Activated naive CD4-positive, alpha-beta T cell treated with anti-CD3 and anti-CD28 coated beads for 36 hours (primary cell): ENCODE measurements at regions of chr12 and their contacts with region 1.

Region 1: GRCh38 chr12:46124848-46125619 is 134.7 kb upstream of the SCAF11 start:
- DNase-seq: peak; percentile 70
- H3K4me3 Mint-ChIP-seq: peak overlapping the region; percentile 10
- H3K27ac Mint-ChIP-seq: no peak overlapping the region
- H3K4me1 Mint-ChIP-seq: no peaks in the 10 kb centered on the region
- H3K27me3 Mint-ChIP-seq: no peaks in the 10 kb centered on the region

Region 2: DNA sequence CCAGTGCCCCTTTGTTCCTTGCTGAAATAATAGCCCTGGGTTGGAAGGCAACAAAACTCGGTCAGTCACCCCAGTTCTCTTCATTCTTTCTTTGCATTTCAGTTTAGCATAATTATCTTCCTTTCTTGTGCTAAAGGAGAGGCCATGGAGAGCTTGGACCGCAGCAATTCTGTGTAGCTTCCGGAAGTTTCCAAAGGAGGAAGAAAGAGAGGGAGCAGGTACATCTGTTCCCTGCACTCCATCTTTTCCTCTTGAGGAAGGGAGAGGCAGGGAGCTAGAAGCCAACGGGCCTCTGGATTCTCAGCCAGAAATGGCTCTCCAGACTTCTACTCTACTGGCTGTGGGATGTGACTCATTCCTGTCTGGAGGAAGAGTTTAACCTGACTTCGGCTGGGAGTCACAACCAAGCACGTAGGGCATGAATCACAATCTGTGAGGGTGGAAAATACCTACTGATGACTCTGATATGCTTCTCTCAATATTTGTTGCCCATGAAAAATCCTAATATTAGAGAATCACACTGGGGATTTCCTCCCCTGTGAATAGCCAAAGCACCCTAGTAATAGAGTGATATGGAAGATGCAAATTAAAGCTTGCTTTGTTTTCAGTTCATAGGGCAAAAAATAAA is 892.2 kb before region 1 on chr12:
- CTCF ChIA-PET with region 1: no interaction called
- intact Hi-C with region 1: no loop called
- DNase-seq: peak; percentile 63
- H3K4me3 Mint-ChIP-seq: no peak overlapping the region
- H3K27ac Mint-ChIP-seq: peak overlapping the region; percentile 78
- H3K4me1 Mint-ChIP-seq: peaks cover 63% of the 10 kb centered on the region
- H3K27me3 Mint-ChIP-seq: no peaks in the 10 kb centered on the region

Region 3: DNA sequence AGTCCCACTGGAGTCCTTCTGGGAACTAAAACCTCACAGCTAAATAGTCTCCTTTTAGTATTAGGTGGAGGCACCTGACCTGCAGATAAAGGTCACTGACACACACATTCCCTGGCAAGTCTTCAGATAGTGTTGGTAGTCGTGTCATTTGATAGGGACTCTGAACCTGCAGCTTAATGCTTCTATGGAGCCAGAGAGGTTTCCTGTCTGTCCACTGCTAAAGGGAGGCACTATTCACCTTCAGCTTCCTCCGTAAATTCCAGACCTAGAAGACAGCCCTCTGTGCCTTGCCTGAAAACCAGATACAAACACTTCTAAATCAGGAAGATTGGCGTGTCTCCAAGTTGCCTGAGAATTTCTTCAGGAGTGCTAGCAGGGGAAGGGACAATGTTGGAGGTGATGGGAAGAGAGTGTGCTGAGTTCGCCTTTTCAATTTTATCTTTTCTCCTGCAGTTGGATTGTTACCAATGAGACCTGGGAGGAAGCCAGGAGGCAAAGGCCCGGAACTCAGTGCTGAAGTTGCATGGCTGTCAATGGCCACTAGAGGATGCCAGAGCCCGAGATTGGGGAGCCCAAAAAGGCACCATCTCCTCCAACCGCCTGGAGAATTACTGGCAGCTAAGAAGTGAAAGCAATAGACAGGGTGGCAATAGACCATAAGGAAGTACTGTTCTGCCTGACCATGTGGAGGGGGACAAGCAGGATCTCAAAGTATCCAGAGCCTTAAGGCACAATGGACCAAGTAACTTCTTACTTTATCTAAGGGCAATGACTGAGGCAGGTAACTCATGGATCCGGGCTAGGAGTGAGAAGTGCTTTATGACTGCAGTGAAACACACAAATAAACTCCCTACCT is 53.0 kb before region 1 on chr12:
- CTCF ChIA-PET with region 1: interaction called, 27 read pairs
- intact Hi-C with region 1: loop called (anchors 1 kb)
- DNase-seq: peak; percentile 82
- H3K4me3 Mint-ChIP-seq: peak overlapping the region; percentile 20
- H3K27ac Mint-ChIP-seq: peak overlapping the region; percentile 19
- H3K4me1 Mint-ChIP-seq: peaks cover 3% of the 10 kb centered on the region
- H3K27me3 Mint-ChIP-seq: no peaks in the 10 kb centered on the region

Region 4: GRCh38 chr12:46332260-46332659 is 207.2 kb after region 1 on chr12:
- CTCF ChIA-PET with region 1: interaction called, 12 read pairs
- intact Hi-C with region 1: no loop called
- DNase-seq: no peak
- H3K4me3 Mint-ChIP-seq: no peak overlapping the region
- H3K27ac Mint-ChIP-seq: no peak overlapping the region
- H3K4me1 Mint-ChIP-seq: no peaks in the 10 kb centered on the region
- H3K27me3 Mint-ChIP-seq: no peaks in the 10 kb centered on the region

Region 5: GRCh38 chr12:46364777-46365580 is 239.9 kb after region 1 on chr12:
- CTCF ChIA-PET with region 1: interaction called, 18 read pairs
- intact Hi-C with region 1: no loop called
- DNase-seq: peak; percentile 45
- H3K4me3 Mint-ChIP-seq: no peak overlapping the region
- H3K27ac Mint-ChIP-seq: peak overlapping the region; percentile 73
- H3K4me1 Mint-ChIP-seq: peaks cover 76% of the 10 kb centered on the region
- H3K27me3 Mint-ChIP-seq: no peaks in the 10 kb centered on the region

Region 6: DNA sequence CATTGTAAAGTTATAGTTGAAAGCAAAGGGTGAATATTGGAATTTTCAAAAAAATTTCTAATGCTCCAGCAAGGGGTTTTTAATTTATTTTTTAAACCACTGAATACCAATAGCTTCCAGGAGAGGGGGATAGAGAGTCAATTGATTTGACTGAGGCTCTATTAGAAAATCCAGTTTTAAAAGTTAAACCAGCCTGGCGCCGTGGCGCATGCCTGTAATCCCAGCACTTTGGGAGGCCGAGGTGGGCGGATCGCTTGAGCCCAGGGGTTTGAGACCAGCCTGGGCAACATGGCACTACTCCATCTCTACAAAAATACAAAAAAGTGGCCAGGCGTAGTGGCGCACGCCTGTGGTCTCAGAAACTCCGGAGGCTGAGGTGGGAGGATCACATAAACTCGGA is 550.7 kb after region 1 on chr12:
- CTCF ChIA-PET with region 1: interaction called, 9 read pairs
- intact Hi-C with region 1: loop called (anchors 1 kb)
- DNase-seq: no peak
- H3K4me3 Mint-ChIP-seq: no peak overlapping the region
- H3K27ac Mint-ChIP-seq: no peak overlapping the region
- H3K4me1 Mint-ChIP-seq: peaks cover 7% of the 10 kb centered on the region
- H3K27me3 Mint-ChIP-seq: no peaks in the 10 kb centered on the region

Region 7: GRCh38 chr12:46983393-46984266 is 858.6 kb after region 1 on chr12:
- CTCF ChIA-PET with region 1: interaction called, 6 read pairs
- intact Hi-C with region 1: loop called (anchors 2 kb)
- DNase-seq: peak; percentile 55
- H3K4me3 Mint-ChIP-seq: no peak overlapping the region
- H3K27ac Mint-ChIP-seq: no peak overlapping the region
- H3K4me1 Mint-ChIP-seq: peaks cover 9% of the 10 kb centered on the region
- H3K27me3 Mint-ChIP-seq: peaks cover 5% of the 10 kb centered on the region